MCF 10A (cell line): ENCODE measurements at regions of chr4 and their contacts with region 1.

Region 1: DNA sequence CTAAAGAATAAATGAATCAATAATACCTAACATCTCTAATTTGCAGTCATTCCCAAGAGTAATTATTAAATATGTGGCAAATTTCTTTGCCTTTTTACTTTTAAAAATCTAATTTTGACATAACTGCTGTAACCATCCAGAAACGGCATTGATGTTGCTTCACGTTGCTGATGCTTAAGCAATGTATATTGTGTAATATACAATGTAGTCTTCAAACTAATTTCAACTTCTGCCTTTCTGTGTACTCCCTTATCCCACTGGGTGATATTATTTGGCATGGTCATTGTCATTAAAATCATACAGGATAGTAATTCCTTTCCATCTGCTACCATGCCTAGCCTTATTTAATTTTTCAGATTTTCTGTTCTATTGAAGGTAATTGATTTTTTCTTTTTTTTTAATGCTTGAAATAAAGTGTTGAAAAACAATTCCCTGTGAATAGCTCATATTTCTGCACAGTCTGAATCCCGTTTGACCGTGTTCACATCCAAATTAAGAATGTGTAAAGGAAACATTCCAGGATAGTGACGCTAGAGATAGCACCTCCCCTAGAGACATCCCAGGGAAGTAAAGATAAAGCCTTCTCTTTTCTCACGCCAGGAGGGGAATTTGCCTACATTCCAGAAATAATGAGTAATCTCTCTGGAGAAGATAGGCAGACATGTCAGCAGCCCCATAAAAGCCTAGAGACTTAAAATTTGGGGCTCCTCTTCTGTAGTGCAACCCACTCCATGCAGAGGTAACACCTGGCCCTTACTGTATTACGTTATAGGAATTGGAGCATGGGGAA is 8.6 kb downstream of the FAM200B start:
- DNase-seq: peak; percentile 70
- H3K4me3 Mint-ChIP-seq: no peak overlapping the region
- H3K27ac Mint-ChIP-seq: no peak overlapping the region
- H3K4me1 Mint-ChIP-seq: peaks cover 24% of the 10 kb centered on the region
- H3K27me3 Mint-ChIP-seq: no peaks in the 10 kb centered on the region
- CTCF ChIP-seq: no peak

Region 2: DNA sequence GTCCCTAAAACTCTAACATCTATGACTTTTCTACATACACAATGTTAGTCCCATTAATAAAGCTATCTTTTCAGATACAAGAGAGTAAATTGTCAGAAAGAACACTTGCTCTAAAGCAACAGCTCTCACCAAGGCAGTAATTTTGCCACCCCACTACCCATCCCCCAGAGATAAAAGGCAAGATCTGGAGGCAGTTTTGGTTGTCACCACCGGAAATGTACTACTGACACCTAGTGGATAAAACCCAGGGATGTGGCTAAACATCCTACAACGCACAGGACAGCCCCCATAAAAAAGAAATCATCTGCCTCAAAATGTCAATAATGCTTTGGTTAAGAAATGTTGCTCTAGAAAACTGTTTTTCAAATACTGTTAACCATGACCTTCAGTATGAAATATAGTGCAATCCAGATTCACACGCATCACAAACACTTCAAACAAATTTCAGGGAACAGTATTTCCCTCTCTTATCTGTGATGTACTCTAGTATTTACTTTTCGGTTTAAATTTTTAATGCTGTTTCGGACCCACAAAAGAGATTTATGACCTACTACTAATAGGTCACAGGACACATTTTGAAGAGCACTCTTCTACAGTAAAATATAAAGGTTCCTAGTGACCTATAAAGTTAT is 40.2 kb before region 1 on chr4:
- CTCF ChIA-PET with region 1: interaction called, 3 read pairs
- POLR2A ChIA-PET with region 1: interaction called, 410 read pairs
- intact Hi-C with region 1: loop called (anchors 5 kb)
- DNase-seq: peak; percentile 71
- H3K4me3 Mint-ChIP-seq: no peak overlapping the region
- H3K27ac Mint-ChIP-seq: no peak overlapping the region
- H3K4me1 Mint-ChIP-seq: peaks cover 20% of the 10 kb centered on the region
- H3K27me3 Mint-ChIP-seq: no peaks in the 10 kb centered on the region
- CTCF ChIP-seq: peak; percentile 66